ENCODE measurements at regions of chr14 and their contacts with region 1.

Region 1: GRCh38 chr14:99563233-99564129 is 40.5 kb downstream of the CCDC85C start:
- DNase-seq: peak; percentile 76 to 89 (median 82)
- H3K4me3 ChIP-seq: no peak overlapping the region
- H3K27ac ChIP-seq: no peak overlapping the region
- H3K4me1 ChIP-seq: peaks cover 13% of the 10 kb centered on the region
- H3K27me3 ChIP-seq: no peaks in the 10 kb centered on the region
- CTCF ChIP-seq: peak; percentile 23 to 40 (median 27)
- EP300 ChIP-seq: no peak
- POLR2A ChIP-seq: no peak

Region 2: DNA sequence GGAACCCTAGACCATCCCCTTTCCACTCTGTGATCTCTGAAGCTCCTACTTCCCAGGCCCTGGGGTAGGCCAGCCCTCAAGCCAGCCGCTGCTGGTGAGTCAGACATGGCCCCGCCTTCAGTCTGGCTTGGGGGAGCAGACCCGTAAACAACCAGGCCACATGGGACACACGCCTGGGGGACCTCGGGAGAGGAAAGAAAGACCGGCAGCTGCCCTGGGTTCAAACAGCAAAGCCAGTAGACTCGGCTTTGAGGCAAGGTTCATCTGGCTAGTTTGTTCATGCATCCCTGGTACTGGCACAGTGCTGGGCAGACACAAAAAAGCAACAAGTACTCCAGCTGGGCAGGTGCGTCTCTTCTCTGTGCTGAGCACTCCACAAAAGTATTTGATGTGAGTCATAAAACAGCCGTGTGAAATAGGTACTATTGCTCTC is 184.7 kb before region 1 on chr14:
- intact Hi-C with region 1: no loop called
- DNase-seq: no peak
- H3K4me3 ChIP-seq: no peak overlapping the region
- H3K27ac ChIP-seq: no peak overlapping the region
- H3K4me1 ChIP-seq: no peaks in the 10 kb centered on the region
- H3K27me3 ChIP-seq: no peaks in the 10 kb centered on the region
- CTCF ChIP-seq: no peak
- EP300 ChIP-seq: no peak
- POLR2A ChIP-seq: no peak

Region 3: DNA sequence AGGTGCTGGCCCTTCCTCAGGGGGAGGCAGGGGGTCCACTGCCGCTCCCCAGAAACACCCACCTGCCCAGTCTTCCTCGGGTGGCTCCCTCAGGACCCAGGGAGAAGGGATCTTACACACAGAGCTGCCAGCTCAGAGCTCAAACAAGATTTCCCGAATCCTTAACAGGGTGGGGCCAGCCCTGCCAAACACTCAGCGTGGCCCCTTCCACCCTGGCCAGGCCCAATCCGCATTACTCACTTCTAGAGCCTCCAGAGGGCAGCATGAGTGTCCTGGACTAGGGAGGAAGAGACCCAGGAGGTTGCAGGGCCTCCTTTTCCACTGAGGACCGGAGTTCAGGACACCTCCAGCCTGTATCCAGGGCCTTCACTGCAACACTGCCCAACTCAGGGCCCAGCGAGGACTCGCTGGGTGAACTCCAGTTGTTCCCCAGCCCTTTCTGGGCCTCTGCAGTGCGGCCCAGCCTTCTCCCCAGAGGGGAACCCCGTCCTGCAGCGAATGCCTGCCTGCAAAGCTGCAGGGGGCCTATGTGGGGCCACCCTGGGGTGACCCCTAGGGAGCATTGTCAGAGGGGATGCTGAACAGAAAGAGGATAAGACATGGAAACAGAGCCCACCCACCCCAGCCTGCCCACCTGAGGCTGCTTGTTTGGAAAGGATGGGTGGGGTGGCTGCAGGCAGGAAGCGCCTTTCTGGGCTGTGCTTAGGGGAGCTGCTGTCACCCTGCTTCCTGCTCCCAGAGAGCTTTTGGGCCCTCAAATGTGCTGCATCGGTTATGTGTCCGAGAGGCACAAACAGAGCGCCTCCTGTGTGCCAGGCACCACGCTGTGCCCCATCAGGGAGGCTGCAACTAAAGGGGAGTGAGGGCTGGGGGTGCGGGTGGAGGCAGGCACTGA is 38.4 kb before region 1 on chr14:
- intact Hi-C with region 1: loop called in 1 of 4 experiments (anchors 5 kb)
- DNase-seq: peak in 1 of 5 donors; percentile 35
- H3K4me3 ChIP-seq: no peak overlapping the region
- H3K27ac ChIP-seq: no peak overlapping the region
- H3K4me1 ChIP-seq: peaks cover 18% of the 10 kb centered on the region
- H3K27me3 ChIP-seq: no peaks in the 10 kb centered on the region
- CTCF ChIP-seq: no peak
- EP300 ChIP-seq: no peak
- POLR2A ChIP-seq: no peak

Region 4: GRCh38 chr14:99579903-99580570 is 16.6 kb after region 1 on chr14:
- intact Hi-C with region 1: no loop called
- DNase-seq: no peak
- H3K4me3 ChIP-seq: no peak overlapping the region
- H3K27ac ChIP-seq: peak overlapping the region in 1 of 2 donors; percentile 73
- H3K4me1 ChIP-seq: peaks cover 45% of the 10 kb centered on the region
- H3K27me3 ChIP-seq: no peaks in the 10 kb centered on the region
- CTCF ChIP-seq: no peak
- EP300 ChIP-seq: no peak
- POLR2A ChIP-seq: no peak

Region 5: GRCh38 chr14:99628832-99629618 is 65.5 kb after region 1 on chr14:
- intact Hi-C with region 1: loop called in 1 of 4 experiments (anchors 5 kb)
- DNase-seq: peak; percentile 68 to 84 (median 78)
- H3K4me3 ChIP-seq: no peak overlapping the region
- H3K27ac ChIP-seq: no peak overlapping the region
- H3K4me1 ChIP-seq: peaks cover 1% of the 10 kb centered on the region
- H3K27me3 ChIP-seq: no peaks in the 10 kb centered on the region
- CTCF ChIP-seq: peak; percentile 95
- EP300 ChIP-seq: no peak
- POLR2A ChIP-seq: no peak